ENCODE measurements at regions of chr10 and their contacts with region 1.

Region 1: GRCh38 chr10:112227331-112227987 is 43.9 kb upstream of the GPAM start:
- DNase-seq: peak; percentile 95
- ATAC-seq: peak; percentile 80
- H3K4me3 ChIP-seq: peak overlapping the region; percentile 59 to 77 (median 74)
- H3K27ac ChIP-seq: peak overlapping the region; percentile 93
- H3K4me1 ChIP-seq: peaks cover 98% of the 10 kb centered on the region
- H3K27me3 ChIP-seq: no peaks in the 10 kb centered on the region; a peak in 1 of 5 replicates
- CTCF ChIP-seq: no peak; the same call in 1 of the 2 replicates
- EP300 ChIP-seq: peak; percentile 93 to 95
- POLR2A ChIP-seq: peak; percentile 87 to 88
- RAD21 ChIP-seq: no peak; the same call in 1 of the 2 replicates

Region 2: DNA sequence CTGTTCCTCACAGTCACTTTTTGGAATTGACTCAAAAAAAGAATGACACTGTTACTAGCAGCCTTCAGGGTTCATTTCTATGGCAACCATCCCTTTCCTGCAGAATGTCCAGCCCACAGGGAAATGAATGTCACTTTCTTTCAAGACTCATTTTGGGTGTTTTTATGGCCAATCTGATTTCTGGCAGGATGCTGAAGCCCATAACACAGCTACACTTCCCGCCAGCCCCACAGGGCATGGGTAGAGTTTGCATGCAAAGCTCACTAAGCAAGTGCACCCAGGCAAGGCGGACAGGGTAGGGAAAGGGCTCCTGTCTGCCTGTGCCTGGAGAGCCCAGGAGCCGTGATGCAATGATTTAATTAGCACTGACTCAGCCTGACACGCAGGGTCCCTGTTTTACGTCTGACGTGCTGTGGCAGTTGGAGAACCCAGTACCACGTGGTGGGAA is 17.8 kb before region 1 on chr10:
- CTCF ChIA-PET with region 1: no interaction called
- POLR2A ChIA-PET with region 1: interaction called, 65 read pairs
- in situ Hi-C with region 1: no loop called
- intact Hi-C with region 1: no loop called
- DNase-seq: no peak
- ATAC-seq: peak; percentile 33
- H3K4me3 ChIP-seq: no peak overlapping the region
- H3K27ac ChIP-seq: no peak overlapping the region
- H3K4me1 ChIP-seq: peaks cover 54% of the 10 kb centered on the region
- H3K27me3 ChIP-seq: no peaks in the 10 kb centered on the region
- CTCF ChIP-seq: no peak
- EP300 ChIP-seq: no peak
- POLR2A ChIP-seq: no peak
- RAD21 ChIP-seq: no peak

Region 3: GRCh38 chr10:112261281-112261822 is 33.9 kb after region 1 on chr10:
- CTCF ChIA-PET with region 1: no interaction called
- POLR2A ChIA-PET with region 1: interaction called, 189 read pairs
- in situ Hi-C with region 1: no loop called
- intact Hi-C with region 1: loop called (anchors 1 kb)
- DNase-seq: peak; percentile 100
- ATAC-seq: peak; percentile 95
- H3K4me3 ChIP-seq: peak overlapping the region in 1 of 3 experiments; percentile 13; a peak in 1 of 6 replicates
- H3K27ac ChIP-seq: peak overlapping the region; percentile 98
- H3K4me1 ChIP-seq: peaks cover 92% of the 10 kb centered on the region
- H3K27me3 ChIP-seq: no peaks in the 10 kb centered on the region
- CTCF ChIP-seq: no peak
- EP300 ChIP-seq: peak; percentile 98 to 100
- POLR2A ChIP-seq: peak in 1 of 2 experiments; percentile 57; a peak in 1 of 4 replicates
- RAD21 ChIP-seq: peak; percentile 40

Region 4: GRCh38 chr10:112278871-112279270 is 51.4 kb after region 1 on chr10:
- CTCF ChIA-PET with region 1: no interaction called
- POLR2A ChIA-PET with region 1: interaction called, 142 read pairs
- in situ Hi-C with region 1: no loop called
- intact Hi-C with region 1: loop called (anchors 1 kb)
- DNase-seq: no peak
- ATAC-seq: no peak
- H3K4me3 ChIP-seq: no peak overlapping the region
- H3K27ac ChIP-seq: peak overlapping the region; percentile 60
- H3K4me1 ChIP-seq: peaks cover 77% of the 10 kb centered on the region
- H3K27me3 ChIP-seq: no peaks in the 10 kb centered on the region
- CTCF ChIP-seq: no peak
- EP300 ChIP-seq: no peak
- POLR2A ChIP-seq: no peak
- RAD21 ChIP-seq: no peak

Region 5: DNA sequence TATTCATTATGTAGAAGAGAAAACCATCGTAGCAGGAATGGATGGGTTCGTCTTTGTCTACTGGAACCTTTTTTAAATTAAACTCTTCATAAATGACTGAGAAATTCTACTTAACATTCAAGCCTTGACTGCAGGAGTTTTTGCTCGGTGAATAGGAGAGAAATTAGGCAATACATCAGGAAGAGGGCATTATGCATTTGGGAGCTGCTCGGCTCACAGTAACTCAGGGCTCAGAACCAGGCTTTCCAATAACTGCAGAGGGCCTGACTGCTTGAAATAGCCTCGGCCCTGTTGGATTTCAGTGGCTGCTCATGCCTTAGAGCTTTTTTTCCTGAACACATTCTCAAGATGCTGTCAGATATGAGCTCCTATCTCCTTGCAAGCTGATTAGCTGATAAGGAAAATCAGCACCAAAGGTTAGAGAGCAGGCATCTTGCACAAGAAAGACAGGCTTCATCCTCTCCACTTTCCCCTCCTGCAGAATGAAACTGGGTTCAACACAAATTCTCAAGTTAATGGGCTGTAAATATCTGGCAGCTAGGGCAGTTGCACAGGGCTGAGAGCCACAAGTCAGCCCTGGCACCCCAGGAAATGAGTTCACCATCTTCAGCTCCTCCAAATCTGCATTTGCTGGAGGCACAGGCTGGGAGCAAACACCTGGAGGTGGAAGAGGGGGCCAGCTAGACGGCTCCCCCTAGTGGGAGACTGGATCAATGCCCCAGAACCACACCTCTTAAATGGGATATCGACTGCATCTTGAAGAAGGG is 80.1 kb after region 1 on chr10:
- CTCF ChIA-PET with region 1: no interaction called
- POLR2A ChIA-PET with region 1: interaction called, 141 read pairs
- in situ Hi-C with region 1: loop called (anchors 5 kb)
- intact Hi-C with region 1: loop called (anchors 2 kb)
- DNase-seq: peak; percentile 61
- ATAC-seq: peak; percentile 87
- H3K4me3 ChIP-seq: no peak overlapping the region; a peak in 1 of 6 replicates
- H3K27ac ChIP-seq: peak overlapping the region; percentile 44
- H3K4me1 ChIP-seq: peaks cover 93% of the 10 kb centered on the region
- H3K27me3 ChIP-seq: no peaks in the 10 kb centered on the region
- CTCF ChIP-seq: peak; percentile 92
- EP300 ChIP-seq: no peak; a peak in 1 of 4 replicates
- POLR2A ChIP-seq: no peak
- RAD21 ChIP-seq: peak; percentile 95

Region 6: GRCh38 chr10:112356686-112357085 is 129.2 kb after region 1 on chr10:
- CTCF ChIA-PET with region 1: no interaction called
- POLR2A ChIA-PET with region 1: no interaction called
- in situ Hi-C with region 1: no loop called
- intact Hi-C with region 1: no loop called
- DNase-seq: no peak
- ATAC-seq: no peak
- H3K4me3 ChIP-seq: no peak overlapping the region
- H3K27ac ChIP-seq: no peak overlapping the region
- H3K4me1 ChIP-seq: peaks cover 36% of the 10 kb centered on the region
- H3K27me3 ChIP-seq: no peaks in the 10 kb centered on the region; a peak in 1 of 5 replicates
- CTCF ChIP-seq: no peak
- EP300 ChIP-seq: no peak
- POLR2A ChIP-seq: no peak
- RAD21 ChIP-seq: no peak

Region 7: GRCh38 chr10:112622786-112623185 is 395.3 kb after region 1 on chr10:
- CTCF ChIA-PET with region 1: no interaction called
- POLR2A ChIA-PET with region 1: no interaction called
- in situ Hi-C with region 1: no loop called
- intact Hi-C with region 1: no loop called
- DNase-seq: no peak
- ATAC-seq: no peak
- H3K4me3 ChIP-seq: no peak overlapping the region
- H3K27ac ChIP-seq: no peak overlapping the region
- H3K4me1 ChIP-seq: no peaks in the 10 kb centered on the region
- H3K27me3 ChIP-seq: no peaks in the 10 kb centered on the region
- CTCF ChIP-seq: no peak
- EP300 ChIP-seq: no peak
- POLR2A ChIP-seq: no peak
- RAD21 ChIP-seq: no peak

Region 8: DNA sequence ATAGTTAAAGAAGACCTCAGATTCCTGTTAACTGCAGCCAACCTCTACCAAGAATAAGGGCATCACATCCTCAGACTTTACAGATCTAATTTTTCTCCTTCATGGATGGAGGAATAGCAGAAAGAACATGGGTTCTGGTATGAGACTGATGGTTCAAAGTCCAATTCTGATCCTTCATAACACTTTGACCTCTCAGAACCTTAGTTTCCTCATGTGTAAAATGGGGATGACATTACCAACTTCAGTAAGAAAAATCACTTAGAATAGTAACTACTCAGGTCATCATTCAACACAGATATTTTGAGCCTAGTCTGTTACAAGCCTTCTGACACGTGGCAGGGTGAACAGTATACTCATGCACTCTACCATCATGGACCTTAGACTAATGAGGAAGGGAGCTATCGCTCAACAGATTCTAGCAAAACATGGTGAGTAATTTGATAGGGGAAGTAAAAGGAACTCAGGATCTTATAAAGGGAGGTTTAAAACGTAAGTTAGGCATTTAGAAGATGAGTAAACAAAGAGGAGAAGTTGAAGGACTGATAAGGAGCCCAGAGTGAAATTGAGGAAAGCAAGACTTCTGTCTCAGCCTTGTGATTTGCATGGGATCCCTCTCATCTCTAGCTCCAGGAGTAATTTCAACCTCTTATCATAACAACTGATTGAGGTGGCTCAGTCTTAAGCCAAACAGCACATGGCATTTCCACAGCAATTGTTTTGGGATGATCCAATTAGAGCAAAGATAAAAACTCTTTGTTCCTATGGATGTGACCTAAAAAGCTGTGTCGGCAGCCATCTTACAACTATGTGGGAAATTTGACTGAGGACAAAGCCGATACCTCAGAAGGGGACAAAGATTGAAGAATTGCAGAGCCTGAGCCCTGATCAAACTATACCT is 653.4 kb after region 1 on chr10:
- CTCF ChIA-PET with region 1: no interaction called
- POLR2A ChIA-PET with region 1: no interaction called
- in situ Hi-C with region 1: no loop called
- intact Hi-C with region 1: no loop called
- DNase-seq: no peak
- ATAC-seq: no peak
- H3K4me3 ChIP-seq: no peak overlapping the region
- H3K27ac ChIP-seq: no peak overlapping the region
- H3K4me1 ChIP-seq: peaks cover 30% of the 10 kb centered on the region
- H3K27me3 ChIP-seq: no peaks in the 10 kb centered on the region; a peak in 1 of 5 replicates
- CTCF ChIP-seq: no peak
- EP300 ChIP-seq: no peak
- POLR2A ChIP-seq: no peak
- RAD21 ChIP-seq: no peak